ENCODE measurements at regions of chr1 and their contacts with region 1.

Region 1: DNA sequence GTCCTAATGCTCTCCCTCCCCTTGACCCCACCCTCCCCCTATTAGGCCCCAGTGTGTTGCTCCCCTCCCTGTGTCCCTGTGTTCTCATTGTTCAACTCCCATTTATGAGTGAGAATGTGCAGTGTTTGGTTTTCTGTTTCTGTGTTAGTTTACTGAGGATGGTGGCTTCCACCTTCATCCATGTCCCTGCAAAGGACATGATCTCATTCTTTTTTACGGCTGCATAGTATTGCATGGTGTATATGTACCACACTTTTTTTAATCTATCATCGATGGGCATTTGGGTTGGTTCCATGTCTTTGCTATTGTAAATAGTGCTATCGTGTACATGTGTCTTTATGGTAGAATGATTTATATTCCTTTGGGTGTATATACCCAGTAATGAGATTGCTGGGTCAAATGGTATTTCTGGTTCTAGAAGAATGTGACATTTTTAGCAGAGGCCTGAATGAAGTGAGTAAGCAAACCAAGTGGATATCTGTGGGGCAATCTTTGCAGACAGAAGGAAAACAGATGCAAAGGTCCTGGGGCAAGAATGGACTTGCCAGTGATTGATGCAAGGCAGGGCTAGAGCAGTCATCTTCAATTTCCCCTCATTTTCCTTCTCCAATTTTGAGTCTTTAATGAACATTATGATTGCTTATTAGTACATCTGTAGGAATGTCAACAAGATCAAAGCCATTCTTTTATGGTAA is 50.2 kb downstream of the UBE4B start:
- DNase-seq: no peak
- ATAC-seq: no peak
- H3K4me3 ChIP-seq: no peak overlapping the region
- H3K27ac ChIP-seq: no peak overlapping the region
- H3K4me1 ChIP-seq: no peaks in the 10 kb centered on the region
- H3K27me3 ChIP-seq: no peaks in the 10 kb centered on the region
- CTCF ChIP-seq: no peak
- POLR2A ChIP-seq: no peak

Region 2: GRCh38 chr1:10280439-10281350 is 197.8 kb after region 1 on chr1:
- in situ Hi-C with region 1: no loop called
- intact Hi-C with region 1: no loop called
- DNase-seq: no peak
- ATAC-seq: no peak
- H3K4me3 ChIP-seq: no peak overlapping the region
- H3K27ac ChIP-seq: peak overlapping the region; percentile 83 to 92 (median 90)
- H3K4me1 ChIP-seq: peaks cover 17 to 46% of the 10 kb centered on the region in 2 donors
- H3K27me3 ChIP-seq: no peaks in the 10 kb centered on the region
- CTCF ChIP-seq: no peak
- POLR2A ChIP-seq: no peak

Region 3: DNA sequence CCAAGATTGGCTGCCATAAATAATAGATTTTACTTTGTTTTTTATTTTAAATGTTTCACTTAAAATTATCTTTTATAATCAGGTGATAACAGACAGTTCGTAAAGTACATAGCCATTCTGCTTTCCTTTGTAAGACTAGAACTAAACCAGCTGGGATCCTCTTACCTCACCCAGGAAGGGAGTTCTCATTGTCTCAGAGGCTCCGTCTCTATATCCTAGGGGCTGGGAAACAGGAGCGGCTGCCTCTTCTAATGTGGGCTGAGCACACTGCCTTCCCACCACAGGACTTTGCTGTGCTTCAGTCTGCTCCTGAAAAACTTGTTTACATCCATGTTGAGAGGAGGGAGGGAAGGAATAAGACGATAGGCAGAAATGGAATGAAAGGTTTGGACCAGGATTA is 270.4 kb after region 1 on chr1:
- in situ Hi-C with region 1: no loop called
- intact Hi-C with region 1: loop called (anchors 5 kb)
- DNase-seq: no peak
- ATAC-seq: no peak
- H3K4me3 ChIP-seq: no peak overlapping the region
- H3K27ac ChIP-seq: no peak overlapping the region
- H3K4me1 ChIP-seq: no peaks in the 10 kb centered on the region
- H3K27me3 ChIP-seq: no peaks in the 10 kb centered on the region
- CTCF ChIP-seq: no peak
- POLR2A ChIP-seq: no peak

Measured in gastrocnemius medialis (tissue), 4 donors.